Naive thymus-derived CD4-positive, alpha-beta T cell (primary cell): ENCODE measurements at regions of chr4 and their contacts with region 1.

Region 1: DNA sequence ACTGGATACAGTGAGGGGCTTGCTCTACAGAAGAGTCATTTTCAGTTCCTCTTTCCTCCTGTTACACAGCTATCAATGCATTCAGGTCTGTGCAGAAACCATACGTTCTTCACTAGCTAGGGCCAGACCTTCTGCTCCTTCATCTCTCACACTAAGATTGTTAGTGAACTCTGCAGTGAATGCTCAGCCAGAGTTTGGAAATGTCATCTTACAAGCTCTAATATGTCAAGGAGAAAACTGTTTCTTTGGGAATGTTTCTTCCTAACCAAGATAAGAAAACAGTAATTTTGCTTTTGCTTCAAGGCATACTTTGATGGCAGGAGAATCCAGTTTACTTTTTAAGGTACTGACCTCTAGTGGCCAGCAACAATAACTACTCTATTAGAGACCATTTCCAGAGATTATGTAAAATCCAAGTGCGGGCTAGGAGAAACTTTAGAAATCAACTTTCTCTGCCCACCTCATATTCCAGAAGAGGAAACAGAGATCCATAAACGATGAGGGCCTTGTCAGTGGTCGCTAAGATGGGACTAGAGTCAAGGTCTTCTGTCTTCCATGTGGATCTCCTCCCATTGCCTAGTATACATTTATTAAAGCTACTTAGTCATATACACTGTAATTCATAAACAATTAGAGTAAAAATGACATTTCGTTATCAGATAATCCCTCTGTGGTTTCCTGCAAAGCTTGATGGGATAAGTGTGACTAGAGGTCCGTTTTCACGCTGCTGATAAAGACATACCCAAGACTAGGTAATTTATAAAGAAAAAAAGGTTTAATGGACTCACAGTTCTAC is 12.1 kb upstream of the CC2D2A start:
- DNase-seq: peak in 6 of 9 donors; percentile 23 to 62 (median 56)
- ATAC-seq: peak; percentile 89
- H3K4me3 ChIP-seq: no peak overlapping the region
- H3K4me3 Mint-ChIP-seq: peak overlapping the region in 2 of 10 donors; percentile 3 to 17
- H3K27ac ChIP-seq: no peak overlapping the region
- H3K27ac Mint-ChIP-seq: peak overlapping the region in 3 of 9 donors; percentile 6 to 59 (median 14)
- H3K4me1 ChIP-seq: no peaks in the 10 kb centered on the region
- H3K4me1 Mint-ChIP-seq: peaks cover 0 to 12% (median 7%) of the 10 kb centered on the region in 7 donors
- H3K27me3 ChIP-seq: no peaks in the 10 kb centered on the region
- H3K27me3 Mint-ChIP-seq: peaks cover 0 to 25% (median 0%) of the 10 kb centered on the region in 5 donors

Region 2: GRCh38 chr4:15231265-15232091 is 226.1 kb before region 1 on chr4:
- CTCF ChIA-PET with region 1: interaction called, 113 read pairs
- POLR2A ChIA-PET with region 1: no interaction called
- intact Hi-C with region 1: loop called (anchors 1 kb)
- DNase-seq: peak; percentile 45 to 72 (median 69)
- ATAC-seq: peak; percentile 86
- H3K4me3 ChIP-seq: no peak overlapping the region
- H3K4me3 Mint-ChIP-seq: no peak overlapping the region
- H3K27ac ChIP-seq: no peak overlapping the region
- H3K27ac Mint-ChIP-seq: peak overlapping the region in 4 of 9 donors; percentile 11 to 68 (median 44)
- H3K4me1 ChIP-seq: peaks cover 0 to 27% of the 10 kb centered on the region in 2 donors
- H3K4me1 Mint-ChIP-seq: peaks cover 24 to 39% (median 35%) of the 10 kb centered on the region in 7 donors
- H3K27me3 ChIP-seq: no peaks in the 10 kb centered on the region
- H3K27me3 Mint-ChIP-seq: peaks cover 0 to 3% (median 0%) of the 10 kb centered on the region in 5 donors

Region 3: GRCh38 chr4:15238720-15239119 is 218.9 kb before region 1 on chr4:
- CTCF ChIA-PET with region 1: interaction called, 113 read pairs
- POLR2A ChIA-PET with region 1: interaction called, 3 read pairs
- intact Hi-C with region 1: loop called (anchors 1 kb)
- DNase-seq: peak in 5 of 9 donors; percentile 24 to 43 (median 32)
- ATAC-seq: peak; percentile 80
- H3K4me3 ChIP-seq: no peak overlapping the region
- H3K4me3 Mint-ChIP-seq: no peak overlapping the region
- H3K27ac ChIP-seq: no peak overlapping the region
- H3K27ac Mint-ChIP-seq: no peak overlapping the region
- H3K4me1 ChIP-seq: peaks cover 0 to 8% of the 10 kb centered on the region in 2 donors
- H3K4me1 Mint-ChIP-seq: peaks cover 9 to 14% (median 11%) of the 10 kb centered on the region in 7 donors
- H3K27me3 ChIP-seq: no peaks in the 10 kb centered on the region
- H3K27me3 Mint-ChIP-seq: no peaks in the 10 kb centered on the region

Region 4: GRCh38 chr4:15410750-15411149 is 46.9 kb before region 1 on chr4:
- CTCF ChIA-PET with region 1: interaction called, 6 read pairs
- POLR2A ChIA-PET with region 1: no interaction called
- intact Hi-C with region 1: loop called in 1 of 2 experiments (anchors 5 kb)
- DNase-seq: peak in 6 of 9 donors; percentile 30 to 56 (median 42)
- ATAC-seq: peak; percentile 71
- H3K4me3 ChIP-seq: peak overlapping the region; percentile 41
- H3K4me3 Mint-ChIP-seq: peak overlapping the region; percentile 43 to 82 (median 70)
- H3K27ac ChIP-seq: peak overlapping the region; percentile 41
- H3K27ac Mint-ChIP-seq: peak overlapping the region in 8 of 9 donors; percentile 73 to 93 (median 85)
- H3K4me1 ChIP-seq: peaks cover 12 to 46% of the 10 kb centered on the region in 2 donors
- H3K4me1 Mint-ChIP-seq: peaks cover 25 to 68% (median 63%) of the 10 kb centered on the region in 7 donors
- H3K27me3 ChIP-seq: no peaks in the 10 kb centered on the region
- H3K27me3 Mint-ChIP-seq: peaks cover 0 to 3% (median 0%) of the 10 kb centered on the region in 5 donors

Region 5: GRCh38 chr4:15469402-15470127 is 12.0 kb after region 1 on chr4 and contains the start of gene CC2D2A:
- CTCF ChIA-PET with region 1: interaction called, 16 read pairs
- POLR2A ChIA-PET with region 1: no interaction called
- intact Hi-C with region 1: no loop called
- DNase-seq: no peak
- ATAC-seq: peak; percentile 36
- H3K4me3 ChIP-seq: peak within 1 kb of the TSS; percentile 28
- H3K4me3 Mint-ChIP-seq: peak within 1 kb of the TSS in 9 of 10 donors; percentile 31 to 76 (median 70)
- H3K27ac ChIP-seq: no peak within 1 kb of the TSS
- H3K27ac Mint-ChIP-seq: peak within 1 kb of the TSS in 4 of 9 donors; percentile 29 to 79 (median 49)
- H3K4me1 ChIP-seq: peaks cover 0 to 10% of the 10 kb centered on the region in 2 donors
- H3K4me1 Mint-ChIP-seq: peaks cover 7 to 16% (median 11%) of the 10 kb centered on the region in 7 donors
- H3K27me3 ChIP-seq: no peaks in the 10 kb centered on the region
- H3K27me3 Mint-ChIP-seq: peaks cover 0 to 20% (median 0%) of the 10 kb centered on the region in 5 donors
- total RNA-seq, gene CC2D2A: 1.3 TPM in 1 of 5 experiments, not detected in the others